Astrocyte of the spinal cord (primary cell): ENCODE measurements at regions of chr1 and their contacts with region 1.

Region 1: DNA sequence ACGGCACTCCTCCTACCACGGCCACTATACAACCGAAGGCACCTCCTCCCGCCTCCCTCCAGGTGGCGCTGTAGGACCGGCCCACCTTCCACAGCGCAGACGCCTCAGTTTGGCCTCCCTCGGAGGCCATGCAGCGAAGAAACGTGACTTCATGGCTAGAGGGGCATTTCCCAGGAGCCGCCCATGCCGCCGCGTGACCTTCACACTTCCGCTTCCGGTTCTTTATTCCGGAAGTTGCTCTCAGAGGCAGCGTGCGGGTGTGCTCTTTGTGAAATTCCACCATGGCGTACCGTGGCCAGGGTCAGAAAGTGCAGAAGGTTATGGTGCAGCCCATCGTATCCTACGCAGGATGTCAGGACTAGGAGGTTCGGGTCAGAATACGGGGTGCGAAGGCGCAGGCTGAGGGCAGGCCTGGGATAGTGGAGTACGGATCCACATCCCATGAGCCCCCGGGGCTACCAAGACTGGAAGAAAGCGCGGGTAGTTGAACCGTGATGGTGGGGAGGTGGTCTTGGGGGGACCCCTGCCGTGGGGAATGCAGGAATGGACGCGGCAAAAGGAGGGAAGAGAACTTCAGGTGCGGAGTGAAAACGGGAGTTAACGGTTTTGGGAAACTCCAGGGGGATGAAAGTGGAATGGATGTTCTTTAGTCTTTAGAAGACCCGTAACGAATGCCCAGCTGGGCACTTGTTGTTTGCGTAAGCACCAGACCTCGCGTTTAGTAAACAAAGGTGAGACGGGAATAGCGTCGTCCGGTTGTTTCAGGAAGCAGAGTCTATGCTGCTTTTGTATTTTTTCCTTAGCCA is at the start of gene SNRPE:
- DNase-seq: peak; percentile 99
- H3K4me3 ChIP-seq: peak within 1 kb of the TSS; percentile 100
- CTCF ChIP-seq: peak; percentile 96

Region 2: GRCh38 chr1:204128964-204129896 is 267.6 kb after region 1 on chr1:
- in situ Hi-C with region 1: loop called (anchors 25 kb)
- DNase-seq: peak; percentile 55
- H3K4me3 ChIP-seq: no peak overlapping the region
- CTCF ChIP-seq: peak; percentile 89